Tibial artery (tissue), 4 donors: ENCODE measurements at regions of chrX and their contacts with region 1.

Region 1: DNA sequence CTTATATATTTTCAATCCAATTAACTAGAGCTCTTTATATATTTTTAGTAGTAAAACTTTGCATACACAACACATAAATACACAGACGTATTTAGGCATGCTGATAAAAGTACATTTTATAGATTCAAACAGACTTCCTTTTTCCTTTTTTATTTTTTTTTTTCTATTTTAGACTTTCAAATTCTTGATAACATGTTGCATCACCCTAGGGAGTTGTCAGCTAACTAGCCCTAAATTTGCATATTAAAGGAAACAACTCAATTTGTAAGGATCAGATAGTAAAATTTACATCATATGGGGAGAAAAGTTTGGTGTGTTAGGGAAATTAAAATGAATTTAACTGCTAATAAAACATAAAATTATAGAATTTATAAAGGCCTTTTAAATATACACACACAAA is 47.4 kb upstream of the APOOL start:
- DNase-seq: no peak
- H3K4me3 ChIP-seq: no peak overlapping the region
- H3K27ac ChIP-seq: no peak overlapping the region
- H3K4me1 ChIP-seq: no peaks in the 10 kb centered on the region
- H3K27me3 ChIP-seq: no peaks in the 10 kb centered on the region
- CTCF ChIP-seq: no peak

Region 2: DNA sequence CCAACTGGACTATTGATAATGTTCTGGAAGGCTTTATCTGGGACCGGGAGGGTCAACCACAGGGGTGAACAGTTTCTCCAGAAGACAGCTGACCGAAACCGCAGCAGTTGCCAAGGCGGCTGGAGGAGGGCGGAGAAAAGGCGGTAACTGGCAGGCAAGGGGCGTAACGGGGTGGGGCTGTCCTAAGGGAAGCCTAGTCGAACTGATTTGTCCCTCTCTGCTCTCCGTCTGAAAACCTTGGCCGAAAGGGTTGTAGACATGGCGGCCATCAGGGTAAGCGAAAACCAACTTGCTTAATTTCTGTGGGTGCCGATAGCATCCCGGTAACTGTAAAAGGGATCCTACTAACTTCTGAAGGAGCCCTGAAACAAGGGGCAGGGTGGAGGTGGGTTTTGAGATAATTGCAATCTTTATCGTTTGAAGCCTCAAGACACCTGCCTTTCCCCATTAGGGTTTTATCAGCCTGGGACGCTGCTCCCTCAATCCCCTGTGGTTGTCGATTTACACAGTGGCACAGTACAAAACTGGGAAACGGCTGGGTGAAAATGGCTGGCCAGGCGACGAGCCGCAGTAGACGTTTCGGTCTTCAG is 47.4 kb after region 1 on chrX and contains the start of gene APOOL:
- intact Hi-C with region 1: loop called (anchors 2 kb)
- DNase-seq: peak; percentile 87 to 91
- H3K4me3 ChIP-seq: peak within 1 kb of the TSS; percentile 66 to 72
- H3K27ac ChIP-seq: peak within 1 kb of the TSS; percentile 69
- H3K4me1 ChIP-seq: peaks cover 0 to 21% (median 3%) of the 10 kb centered on the region in 4 donors
- H3K27me3 ChIP-seq: no peaks in the 10 kb centered on the region
- CTCF ChIP-seq: no peak